CD4-positive, alpha-beta T cell (primary cell): ENCODE measurements at regions of chr2 and their contacts with region 1.

Region 1: GRCh38 chr2:204177977-204178540 is 241.5 kb downstream of the ICOS start:
- DNase-seq: peak; percentile 48 to 82 (median 62)
- ATAC-seq: peak; percentile 69
- H3K4me3 ChIP-seq: no peak overlapping the region
- H3K4me3 Mint-ChIP-seq: no peak overlapping the region
- H3K27ac ChIP-seq: no peak overlapping the region
- H3K27ac Mint-ChIP-seq: no peak overlapping the region
- H3K4me1 ChIP-seq: peaks cover 4% of the 10 kb centered on the region
- H3K4me1 Mint-ChIP-seq: no peaks in the 10 kb centered on the region
- H3K27me3 ChIP-seq: peaks cover 5 to 6% of the 10 kb centered on the region in 2 experiments
- H3K27me3 Mint-ChIP-seq: peaks cover 10% of the 10 kb centered on the region
- CTCF ChIP-seq: peak; percentile 66

Region 2: DNA sequence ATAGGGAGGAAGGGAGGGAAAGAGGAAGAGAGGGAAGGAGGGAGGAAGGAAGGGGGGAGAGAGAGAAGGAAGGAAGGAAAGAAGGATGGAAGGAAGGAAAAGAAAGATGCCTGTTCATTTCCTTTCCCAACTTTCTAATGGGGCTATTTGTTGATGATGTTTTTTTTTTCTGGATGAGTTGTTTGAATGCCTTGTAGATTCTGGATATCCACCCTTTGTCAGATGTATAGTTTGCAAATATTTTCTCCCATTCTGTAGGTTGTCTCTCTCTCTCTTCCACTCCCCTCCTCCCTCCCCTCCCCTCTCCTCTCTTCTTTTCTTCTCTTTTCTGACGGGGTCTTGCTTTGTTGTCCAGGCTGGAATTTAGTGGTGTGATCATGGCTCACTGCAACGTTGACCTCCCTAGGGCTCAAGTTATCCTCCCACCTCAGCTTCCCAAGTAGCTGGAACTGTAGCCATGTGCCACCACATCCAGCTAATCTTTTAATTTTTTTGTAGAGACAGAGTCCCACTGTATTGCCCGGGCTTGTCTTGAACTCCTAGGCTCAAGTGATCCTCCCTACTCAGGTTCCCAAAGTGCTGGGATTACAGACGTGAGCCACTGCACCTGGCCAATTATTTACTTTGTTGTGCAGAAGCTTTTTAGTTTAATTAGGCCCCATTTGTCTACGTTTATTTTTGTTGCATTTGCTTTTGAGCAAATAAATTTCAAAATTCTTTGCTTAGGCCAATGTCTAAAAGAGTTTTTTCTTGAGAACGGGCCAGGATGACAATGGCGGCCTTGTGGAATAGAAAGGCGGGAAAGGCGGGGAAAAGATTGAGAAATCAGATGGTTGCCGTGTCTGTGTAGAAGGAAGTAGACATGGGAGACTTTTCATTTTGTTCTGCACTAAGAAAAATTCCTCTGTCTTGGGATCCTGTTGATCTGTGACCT is 1600.5 kb before region 1 on chr2:
- CTCF ChIA-PET with region 1: no interaction called
- POLR2A ChIA-PET with region 1: no interaction called
- intact Hi-C with region 1: no loop called
- DNase-seq: no peak
- ATAC-seq: no peak
- H3K4me3 ChIP-seq: no peak overlapping the region
- H3K4me3 Mint-ChIP-seq: no peak overlapping the region
- H3K27ac ChIP-seq: no peak overlapping the region
- H3K27ac Mint-ChIP-seq: no peak overlapping the region
- H3K4me1 ChIP-seq: no peaks in the 10 kb centered on the region
- H3K4me1 Mint-ChIP-seq: no peaks in the 10 kb centered on the region
- H3K27me3 ChIP-seq: no peaks in the 10 kb centered on the region
- H3K27me3 Mint-ChIP-seq: no peaks in the 10 kb centered on the region
- CTCF ChIP-seq: no peak

Region 3: GRCh38 chr2:203928849-203929248 is 249.2 kb before region 1 on chr2:
- CTCF ChIA-PET with region 1: interaction called, 3 read pairs
- POLR2A ChIA-PET with region 1: no interaction called
- intact Hi-C with region 1: loop called (anchors 1 to 2 kb)
- DNase-seq: peak in 3 of 14 experiments; percentile 52 to 62 (median 59)
- ATAC-seq: peak; percentile 41
- H3K4me3 ChIP-seq: no peak overlapping the region
- H3K4me3 Mint-ChIP-seq: no peak overlapping the region
- H3K27ac ChIP-seq: no peak overlapping the region
- H3K27ac Mint-ChIP-seq: no peak overlapping the region
- H3K4me1 ChIP-seq: peaks cover 19% of the 10 kb centered on the region
- H3K4me1 Mint-ChIP-seq: peaks cover 39% of the 10 kb centered on the region
- H3K27me3 ChIP-seq: no peaks in the 10 kb centered on the region
- H3K27me3 Mint-ChIP-seq: no peaks in the 10 kb centered on the region
- CTCF ChIP-seq: peak; percentile 80

Region 4: GRCh38 chr2:204027091-204027490 is 151.0 kb before region 1 on chr2:
- CTCF ChIA-PET with region 1: no interaction called
- POLR2A ChIA-PET with region 1: no interaction called
- intact Hi-C with region 1: loop called in 1 of 2 experiments (anchors 5 kb)
- DNase-seq: peak in 6 of 14 experiments; percentile 8 to 72 (median 45)
- ATAC-seq: peak; percentile 78
- H3K4me3 ChIP-seq: no peak overlapping the region
- H3K4me3 Mint-ChIP-seq: no peak overlapping the region
- H3K27ac ChIP-seq: no peak overlapping the region
- H3K27ac Mint-ChIP-seq: peak overlapping the region; percentile 78
- H3K4me1 ChIP-seq: peaks cover 22% of the 10 kb centered on the region
- H3K4me1 Mint-ChIP-seq: peaks cover 29% of the 10 kb centered on the region
- H3K27me3 ChIP-seq: no peaks in the 10 kb centered on the region
- H3K27me3 Mint-ChIP-seq: no peaks in the 10 kb centered on the region
- CTCF ChIP-seq: no peak

Region 5: DNA sequence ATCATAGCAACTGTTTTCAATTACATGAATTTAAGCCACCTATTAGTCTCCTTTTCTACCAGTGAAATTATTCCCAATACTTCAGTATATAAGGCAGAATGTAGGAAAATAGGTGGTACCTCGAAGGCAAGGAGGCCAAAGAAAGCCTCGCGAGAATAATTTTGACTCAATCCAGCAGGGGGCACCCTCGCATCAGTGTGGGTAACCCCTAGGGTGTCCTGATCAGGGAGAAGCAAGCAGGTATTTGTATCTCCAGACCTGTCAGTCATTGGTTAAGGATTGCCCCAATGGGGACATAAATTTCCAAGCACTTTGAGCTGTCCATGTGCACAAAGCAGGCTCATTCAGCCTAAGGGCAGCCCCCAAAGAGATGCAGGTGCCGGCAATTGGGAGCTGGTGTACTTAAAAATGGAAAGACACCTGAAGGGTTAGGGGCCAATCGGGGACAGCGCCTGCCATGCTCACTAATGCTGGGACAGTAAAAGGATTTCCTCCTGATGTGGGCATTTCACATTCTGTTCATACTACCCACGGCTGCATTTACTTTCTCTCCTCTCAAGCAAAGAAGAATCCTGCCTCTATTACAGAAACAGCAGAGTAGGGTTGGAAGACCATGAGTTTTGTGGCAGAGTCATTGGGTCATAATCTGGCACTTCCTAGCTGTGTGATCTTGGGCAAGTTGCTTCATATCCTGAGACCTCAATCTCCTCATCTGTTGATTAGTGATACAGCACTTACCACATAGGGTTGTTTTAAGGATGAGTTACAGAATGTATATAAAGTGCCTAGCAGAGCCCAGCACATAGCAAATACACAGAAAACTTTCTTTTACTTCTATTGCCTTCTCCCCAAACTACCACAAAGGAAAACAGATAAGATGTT is 105.4 kb before region 1 on chr2:
- CTCF ChIA-PET with region 1: interaction called, 3 read pairs
- POLR2A ChIA-PET with region 1: no interaction called
- intact Hi-C with region 1: loop called in 1 of 2 experiments (anchors 5 kb)
- DNase-seq: peak; percentile 27 to 70 (median 48)
- ATAC-seq: peak; percentile 29
- H3K4me3 ChIP-seq: no peak overlapping the region
- H3K4me3 Mint-ChIP-seq: no peak overlapping the region
- H3K27ac ChIP-seq: no peak overlapping the region
- H3K27ac Mint-ChIP-seq: no peak overlapping the region
- H3K4me1 ChIP-seq: no peaks in the 10 kb centered on the region
- H3K4me1 Mint-ChIP-seq: no peaks in the 10 kb centered on the region
- H3K27me3 ChIP-seq: no peaks in the 10 kb centered on the region
- H3K27me3 Mint-ChIP-seq: no peaks in the 10 kb centered on the region
- CTCF ChIP-seq: peak; percentile 65

Region 6: DNA sequence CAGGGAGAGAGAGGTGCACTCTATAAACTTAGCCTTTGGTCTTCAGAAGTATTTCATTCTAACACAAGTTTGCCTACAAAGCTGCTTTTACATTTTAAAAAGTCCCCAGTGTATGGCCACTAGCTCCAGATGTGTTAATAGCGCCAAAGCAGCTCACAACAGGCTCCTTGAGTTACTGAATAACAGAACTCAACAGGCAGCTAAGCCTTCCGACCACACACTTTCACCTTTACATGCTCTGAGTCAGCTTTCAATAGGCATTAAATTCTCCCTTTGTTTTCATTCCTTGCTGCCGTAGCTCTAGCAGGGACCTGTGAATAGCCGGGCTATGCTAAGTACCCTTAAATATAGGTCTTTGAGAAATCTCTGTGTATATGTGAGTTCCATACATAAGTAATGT is 104.5 kb after region 1 on chr2:
- CTCF ChIA-PET with region 1: no interaction called
- POLR2A ChIA-PET with region 1: no interaction called
- intact Hi-C with region 1: no loop called
- DNase-seq: no peak
- ATAC-seq: no peak
- H3K4me3 ChIP-seq: no peak overlapping the region
- H3K4me3 Mint-ChIP-seq: no peak overlapping the region
- H3K27ac ChIP-seq: no peak overlapping the region
- H3K27ac Mint-ChIP-seq: no peak overlapping the region
- H3K4me1 ChIP-seq: no peaks in the 10 kb centered on the region
- H3K4me1 Mint-ChIP-seq: no peaks in the 10 kb centered on the region
- H3K27me3 ChIP-seq: peaks cover 0 to 12% of the 10 kb centered on the region in 2 experiments
- H3K27me3 Mint-ChIP-seq: peaks cover 55% of the 10 kb centered on the region
- CTCF ChIP-seq: no peak

Region 7: GRCh38 chr2:204715361-204715760 is 537.3 kb after region 1 on chr2:
- CTCF ChIA-PET with region 1: no interaction called
- POLR2A ChIA-PET with region 1: no interaction called
- intact Hi-C with region 1: no loop called
- DNase-seq: no peak
- ATAC-seq: no peak
- H3K4me3 ChIP-seq: no peak overlapping the region
- H3K4me3 Mint-ChIP-seq: no peak overlapping the region
- H3K27ac ChIP-seq: no peak overlapping the region
- H3K27ac Mint-ChIP-seq: no peak overlapping the region
- H3K4me1 ChIP-seq: no peaks in the 10 kb centered on the region
- H3K4me1 Mint-ChIP-seq: no peaks in the 10 kb centered on the region
- H3K27me3 ChIP-seq: no peaks in the 10 kb centered on the region
- H3K27me3 Mint-ChIP-seq: no peaks in the 10 kb centered on the region
- CTCF ChIP-seq: no peak